ENCODE measurements at regions of chr1 and their contacts with region 1.

Region 1: DNA sequence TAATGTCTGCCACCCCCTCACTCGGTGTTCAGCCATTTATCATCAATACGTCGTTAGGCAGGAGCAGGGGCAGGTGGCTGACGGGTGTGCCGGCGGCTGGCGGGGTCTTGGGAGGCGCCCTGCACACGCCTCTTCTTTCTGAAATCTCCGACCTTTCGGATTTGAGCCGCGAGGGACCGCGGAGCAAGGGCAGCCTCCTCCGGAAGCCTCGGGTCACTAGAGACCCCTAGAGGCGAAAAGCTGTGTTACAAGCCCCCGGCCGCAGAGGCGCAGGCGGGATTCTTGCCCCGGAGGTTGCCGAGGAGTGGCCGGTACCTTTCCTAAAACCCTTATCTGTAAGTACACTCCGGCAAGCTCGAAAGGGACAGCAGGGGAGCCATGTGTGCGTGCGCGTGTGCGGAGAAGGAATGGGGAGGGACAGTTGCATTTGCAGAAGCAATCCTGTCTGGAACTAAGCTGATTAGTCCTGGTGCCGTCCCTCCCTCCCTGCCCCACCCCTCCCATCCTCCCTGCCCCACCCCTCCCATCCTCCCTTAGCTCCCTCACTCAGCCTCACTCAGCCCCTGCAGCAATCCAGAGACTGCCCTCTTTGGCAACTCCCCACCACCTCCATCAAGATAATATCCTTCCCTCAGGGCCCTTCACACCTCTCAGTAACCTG is 11.0 kb downstream of the BRINP2 start:
- DNase-seq: peak; percentile 68
- H3K4me3 Mint-ChIP-seq: peak overlapping the region; percentile 56
- H3K27ac Mint-ChIP-seq: no peak overlapping the region
- H3K4me1 Mint-ChIP-seq: peaks cover 8% of the 10 kb centered on the region
- H3K27me3 Mint-ChIP-seq: peaks cover 70% of the 10 kb centered on the region
- CTCF ChIP-seq: peak; percentile 96

Region 2: DNA sequence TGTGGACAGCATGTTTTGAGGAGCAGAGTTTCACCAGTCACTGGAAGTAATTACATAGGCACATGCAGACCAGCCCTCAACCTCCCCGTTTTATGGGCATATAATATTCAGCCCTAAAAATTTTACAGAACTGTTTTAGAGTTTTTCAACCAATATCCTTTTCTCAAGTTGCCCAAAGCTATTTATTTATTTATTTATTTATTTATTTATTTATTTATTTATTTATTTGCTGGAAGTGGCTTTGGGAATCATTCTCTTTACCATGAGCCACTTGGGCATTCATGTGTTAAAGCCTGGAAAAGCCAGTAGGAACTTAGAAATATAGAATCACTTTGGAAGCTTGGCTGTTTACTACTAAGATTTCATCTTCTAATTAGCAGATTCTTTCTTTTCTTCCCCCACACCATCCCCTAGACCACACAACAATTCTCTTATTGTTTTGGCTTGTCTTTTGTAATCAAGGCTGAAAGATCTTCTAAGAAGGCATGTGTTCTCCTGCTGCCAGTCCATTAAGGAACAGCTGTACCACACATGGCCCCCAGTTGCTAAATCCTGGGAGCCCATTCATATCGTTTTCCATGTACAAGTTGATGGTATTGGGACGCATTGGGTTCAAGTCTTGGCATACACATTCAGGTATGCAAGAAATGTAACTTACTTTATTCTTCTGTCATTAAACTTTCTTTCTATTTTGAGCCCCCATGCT is 498.8 kb before region 1 on chr1:
- CTCF ChIA-PET with region 1: no interaction called
- POLR2A ChIA-PET with region 1: no interaction called
- intact Hi-C with region 1: no loop called
- DNase-seq: no peak
- H3K4me3 Mint-ChIP-seq: no peak overlapping the region
- H3K27ac Mint-ChIP-seq: no peak overlapping the region
- H3K4me1 Mint-ChIP-seq: no peaks in the 10 kb centered on the region
- H3K27me3 Mint-ChIP-seq: peaks cover 12% of the 10 kb centered on the region
- CTCF ChIP-seq: no peak

Region 3: DNA sequence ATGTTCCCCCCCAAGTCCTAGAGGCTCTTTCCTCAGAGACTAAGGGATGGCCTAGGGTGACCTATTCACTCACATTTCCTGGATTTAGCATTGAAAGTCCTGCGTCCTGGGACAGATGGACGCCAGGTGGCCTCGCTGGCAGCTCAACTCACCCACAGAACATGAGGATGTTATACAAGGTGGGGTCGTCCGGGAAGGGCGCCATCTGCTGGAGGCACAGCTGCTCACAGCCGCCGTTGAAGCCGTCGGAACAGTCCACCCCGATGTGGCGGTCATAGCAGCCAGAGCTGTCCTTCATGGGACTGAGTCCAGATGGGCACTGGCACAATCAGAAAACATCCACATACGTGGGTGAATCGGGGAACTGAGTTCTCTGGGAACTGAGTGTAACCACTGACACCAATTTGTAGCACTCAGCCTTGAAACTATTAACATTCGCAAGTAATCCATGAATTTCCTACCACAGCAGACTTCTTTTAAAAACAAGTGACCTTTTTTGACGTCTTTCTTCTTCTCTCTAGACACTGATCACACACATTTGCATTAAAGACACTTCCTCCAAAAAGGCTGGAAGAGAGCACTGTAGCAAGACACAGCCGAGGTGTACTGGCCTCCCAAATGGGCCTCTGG is 232.6 kb before region 1 on chr1:
- CTCF ChIA-PET with region 1: interaction called, 10 read pairs
- POLR2A ChIA-PET with region 1: no interaction called
- intact Hi-C with region 1: loop called (anchors 1 kb)
- DNase-seq: peak; percentile 65
- H3K4me3 Mint-ChIP-seq: no peak overlapping the region
- H3K27ac Mint-ChIP-seq: no peak overlapping the region
- H3K4me1 Mint-ChIP-seq: no peaks in the 10 kb centered on the region
- H3K27me3 Mint-ChIP-seq: no peaks in the 10 kb centered on the region
- CTCF ChIP-seq: peak; percentile 77

Region 4: GRCh38 chr1:177209357-177209756 is 27.6 kb after region 1 on chr1:
- CTCF ChIA-PET with region 1: interaction called, 10 read pairs
- POLR2A ChIA-PET with region 1: interaction called, 4 read pairs
- intact Hi-C with region 1: no loop called
- DNase-seq: peak; percentile 100
- H3K4me3 Mint-ChIP-seq: peak overlapping the region; percentile 10
- H3K27ac Mint-ChIP-seq: peak overlapping the region; percentile 52
- H3K4me1 Mint-ChIP-seq: peaks cover 20% of the 10 kb centered on the region
- H3K27me3 Mint-ChIP-seq: no peaks in the 10 kb centered on the region
- CTCF ChIP-seq: no peak

Region 5: GRCh38 chr1:177256153-177257075 is 74.7 kb after region 1 on chr1:
- CTCF ChIA-PET with region 1: interaction called, 3 read pairs
- POLR2A ChIA-PET with region 1: no interaction called
- intact Hi-C with region 1: loop called (anchors 1 kb)
- DNase-seq: peak; percentile 96
- H3K4me3 Mint-ChIP-seq: no peak overlapping the region
- H3K27ac Mint-ChIP-seq: no peak overlapping the region
- H3K4me1 Mint-ChIP-seq: peaks cover 21% of the 10 kb centered on the region
- H3K27me3 Mint-ChIP-seq: no peaks in the 10 kb centered on the region
- CTCF ChIP-seq: peak; percentile 70

Region 6: GRCh38 chr1:177780096-177780700 is 598.4 kb after region 1 on chr1:
- CTCF ChIA-PET with region 1: interaction called, 17 read pairs
- POLR2A ChIA-PET with region 1: no interaction called
- intact Hi-C with region 1: loop called (anchors 10 kb)
- DNase-seq: peak; percentile 70
- H3K4me3 Mint-ChIP-seq: no peak overlapping the region
- H3K27ac Mint-ChIP-seq: no peak overlapping the region
- H3K4me1 Mint-ChIP-seq: no peaks in the 10 kb centered on the region
- H3K27me3 Mint-ChIP-seq: peaks cover 34% of the 10 kb centered on the region
- CTCF ChIP-seq: peak; percentile 64

Measured in MCF 10A (cell line).